H1 (cell line): ENCODE measurements at regions of chr1 and their contacts with region 1.

Region 1: DNA sequence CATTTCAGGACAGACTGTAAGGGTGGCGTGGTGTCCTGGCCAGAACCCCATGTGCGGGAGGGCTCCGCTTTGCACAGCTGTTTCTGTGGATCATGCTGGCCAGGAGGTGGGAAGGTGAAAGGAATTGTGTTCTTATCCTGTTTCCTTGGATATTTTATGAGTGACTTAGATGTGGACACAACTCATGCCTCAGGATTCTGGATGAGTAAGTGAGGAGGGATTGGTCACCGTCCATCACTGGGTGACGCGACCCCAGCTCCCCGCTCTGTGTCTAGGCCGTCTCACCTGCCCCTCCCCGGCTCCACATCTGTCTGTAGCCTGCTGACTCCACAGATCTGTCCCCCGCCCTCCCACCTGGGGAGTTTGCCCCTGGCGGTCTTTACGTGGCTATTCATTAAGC is 48.8 kb downstream of the PIK3CD start:
- DNase-seq: no peak
- H3K4me3 ChIP-seq: no peak overlapping the region
- H3K27ac ChIP-seq: no peak overlapping the region
- H3K4me1 ChIP-seq: peaks cover 0 to 2% (median 0%) of the 10 kb centered on the region in 4 experiments; a peak in 1 of 7 replicates
- H3K27me3 ChIP-seq: no peaks in the 10 kb centered on the region
- CTCF ChIP-seq: no peak
- EP300 ChIP-seq: no peak
- POLR2A ChIP-seq: no peak
- RAD21 ChIP-seq: no peak

Region 2: GRCh38 chr1:9717193-9718005 is 17.1 kb after region 1 on chr1:
- CTCF ChIA-PET with region 1: interaction called, 54 read pairs
- POLR2A ChIA-PET with region 1: interaction called, 13 read pairs
- DNase-seq: no peak
- H3K4me3 ChIP-seq: no peak overlapping the region
- H3K27ac ChIP-seq: peak overlapping the region; percentile 49; the same call in 1 of the 2 replicates
- H3K4me1 ChIP-seq: peaks cover 4 to 50% (median 35%) of the 10 kb centered on the region in 4 experiments
- H3K27me3 ChIP-seq: no peaks in the 10 kb centered on the region
- CTCF ChIP-seq: peak in 2 of 3 experiments; percentile 33 to 42; a peak in 1 of 4 replicates
- EP300 ChIP-seq: no peak
- POLR2A ChIP-seq: no peak
- RAD21 ChIP-seq: peak in 1 of 2 experiments; percentile 34; a peak in 1 of 4 replicates

Region 3: DNA sequence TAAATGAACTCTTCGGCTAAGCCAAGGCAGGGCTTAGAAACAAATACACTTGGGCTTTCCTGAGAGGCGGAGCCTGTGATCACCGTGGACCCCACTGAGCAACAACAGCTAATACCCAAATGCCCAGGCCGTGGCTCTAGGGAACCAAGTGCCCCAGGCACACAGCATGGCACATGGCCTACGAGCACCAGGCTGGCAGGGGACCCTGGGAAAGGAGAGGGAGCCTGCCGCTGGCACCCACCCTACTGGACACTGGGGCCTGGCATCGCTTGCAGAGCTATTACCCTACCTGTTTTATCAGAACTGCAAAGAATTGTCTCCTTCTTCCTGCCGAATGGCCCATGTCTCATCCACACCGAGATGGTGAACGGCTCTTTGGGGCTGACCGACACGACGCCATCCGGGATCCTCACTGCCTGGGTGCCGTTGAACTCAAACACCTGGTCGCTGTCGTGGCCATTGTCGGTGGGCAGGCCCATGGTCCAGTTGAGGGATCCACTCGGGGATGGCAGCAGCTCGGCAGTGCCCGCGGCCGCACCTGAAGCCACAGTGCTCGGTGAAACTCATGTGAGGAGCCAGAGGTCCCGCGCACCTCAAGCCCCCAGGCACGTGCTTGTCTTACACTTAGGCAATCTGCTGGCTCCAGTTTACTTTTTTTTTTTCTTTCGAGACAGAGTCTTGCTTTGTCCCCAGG is 43.9 kb after region 1 on chr1:
- CTCF ChIA-PET with region 1: no interaction called
- POLR2A ChIA-PET with region 1: no interaction called
- DNase-seq: no peak
- H3K4me3 ChIP-seq: no peak overlapping the region
- H3K27ac ChIP-seq: no peak overlapping the region
- H3K4me1 ChIP-seq: no peaks in the 10 kb centered on the region
- H3K27me3 ChIP-seq: no peaks in the 10 kb centered on the region
- CTCF ChIP-seq: no peak
- EP300 ChIP-seq: no peak
- POLR2A ChIP-seq: no peak
- RAD21 ChIP-seq: no peak

Region 4: GRCh38 chr1:9823943-9824701 is 123.8 kb after region 1 on chr1 and contains the start of gene CLSTN1:
- CTCF ChIA-PET with region 1: no interaction called
- POLR2A ChIA-PET with region 1: no interaction called
- DNase-seq: peak in 1 of 2 experiments; percentile 93
- H3K4me3 ChIP-seq: peak within 1 kb of the TSS; percentile 68 to 91 (median 86)
- H3K27ac ChIP-seq: no peak within 1 kb of the TSS; the same call in 1 of the 2 replicates
- H3K4me1 ChIP-seq: peaks cover 4 to 18% (median 13%) of the 10 kb centered on the region in 4 experiments
- H3K27me3 ChIP-seq: peaks cover 0 to 15% (median 14%) of the 10 kb centered on the region in 4 experiments; a peak in 6 of 7 replicates
- CTCF ChIP-seq: no peak
- EP300 ChIP-seq: no peak
- POLR2A ChIP-seq: peak in 1 of 2 experiments; percentile 30; a peak in 1 of 3 replicates
- RAD21 ChIP-seq: no peak
- total RNA-seq, gene CLSTN1: 97.4 and 99.0 TPM in 2 replicates